AG04450 (cell line): ENCODE measurements at regions of chr1 and their contacts with region 1.

Region 1: GRCh38 chr1:41416552-41417334 is 55.5 kb downstream of the FOXO6 start:
- DNase-seq: peak; percentile 36
- H3K4me3 ChIP-seq: no peak overlapping the region
- H3K27ac ChIP-seq: no peak overlapping the region
- H3K27me3 ChIP-seq: peaks cover 21% of the 10 kb centered on the region
- CTCF ChIP-seq: peak; percentile 94

Region 2: GRCh38 chr1:41268154-41268770 is 148.5 kb before region 1 on chr1:
- CTCF ChIA-PET with region 1: interaction called, 19 read pairs
- POLR2A ChIA-PET with region 1: no interaction called
- DNase-seq: peak; percentile 46
- H3K4me3 ChIP-seq: no peak overlapping the region
- H3K27ac ChIP-seq: no peak overlapping the region
- H3K27me3 ChIP-seq: peaks cover 19% of the 10 kb centered on the region
- CTCF ChIP-seq: peak; percentile 96

Region 3: DNA sequence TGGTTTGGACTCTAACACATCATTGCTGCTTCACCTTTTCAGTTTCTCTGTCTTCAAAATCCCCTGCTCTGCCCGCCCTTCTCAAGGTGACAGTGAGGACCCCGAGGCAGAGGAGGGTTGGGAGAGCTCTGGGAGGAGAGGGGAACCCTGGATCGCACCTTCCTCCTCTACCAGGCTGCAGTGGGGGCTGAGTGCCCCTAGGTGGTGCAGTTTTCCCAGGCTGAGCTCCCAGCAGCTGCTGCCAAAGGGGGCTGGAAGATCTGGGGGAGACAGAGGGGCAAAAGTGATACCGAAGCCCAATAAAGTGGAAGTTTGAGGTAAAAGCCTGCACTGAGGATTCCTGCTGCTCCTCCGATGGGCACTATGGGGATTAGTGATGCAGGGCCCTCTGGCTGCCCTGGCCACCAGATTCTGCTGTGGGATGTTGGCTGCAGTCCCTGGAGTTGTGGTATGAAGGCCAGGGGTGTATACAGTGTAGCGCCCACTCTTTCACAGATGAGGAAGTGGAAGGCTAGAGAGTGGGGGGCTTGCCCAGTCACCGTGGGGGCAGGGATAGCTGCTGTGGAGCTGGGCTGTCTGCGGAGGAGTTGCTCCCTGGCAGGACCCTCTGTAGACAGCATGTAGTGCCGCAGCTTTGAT is 133.9 kb before region 1 on chr1:
- CTCF ChIA-PET with region 1: interaction called, 82 read pairs
- POLR2A ChIA-PET with region 1: no interaction called
- DNase-seq: no peak
- H3K4me3 ChIP-seq: no peak overlapping the region
- H3K27ac ChIP-seq: no peak overlapping the region
- H3K27me3 ChIP-seq: peaks cover 51% of the 10 kb centered on the region
- CTCF ChIP-seq: peak; percentile 94

Region 4: DNA sequence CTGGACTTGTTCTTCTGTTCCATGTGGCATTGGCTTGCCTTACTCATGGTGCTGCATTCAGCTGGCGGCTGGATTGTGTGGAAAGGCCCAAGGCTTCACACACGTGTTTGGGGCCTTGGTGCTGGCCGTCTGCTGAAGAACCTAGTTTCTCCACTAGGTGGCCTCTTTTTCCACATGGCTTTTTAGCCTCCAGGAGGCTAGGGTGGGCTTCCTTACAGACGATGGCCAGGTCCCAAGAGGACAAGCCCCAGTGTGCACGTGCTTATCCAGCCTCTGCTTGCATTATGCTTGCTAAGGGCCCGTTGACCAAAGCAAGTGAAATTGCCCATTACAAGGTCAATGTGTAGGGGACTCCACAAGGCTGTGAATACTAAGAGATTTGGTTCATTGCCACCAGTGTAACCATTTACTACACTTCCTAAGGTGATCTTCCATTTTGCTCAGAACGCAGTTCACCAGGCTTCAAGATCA is 103.0 kb before region 1 on chr1:
- CTCF ChIA-PET with region 1: interaction called, 10 read pairs
- POLR2A ChIA-PET with region 1: no interaction called
- DNase-seq: no peak
- H3K4me3 ChIP-seq: no peak overlapping the region
- H3K27ac ChIP-seq: no peak overlapping the region
- H3K27me3 ChIP-seq: peaks cover 8% of the 10 kb centered on the region
- CTCF ChIP-seq: peak; percentile 43

Region 5: GRCh38 chr1:41322835-41323627 is 93.7 kb before region 1 on chr1:
- CTCF ChIA-PET with region 1: interaction called, 17 read pairs
- POLR2A ChIA-PET with region 1: no interaction called
- DNase-seq: no peak
- H3K4me3 ChIP-seq: no peak overlapping the region
- H3K27ac ChIP-seq: no peak overlapping the region
- H3K27me3 ChIP-seq: peaks cover 14% of the 10 kb centered on the region
- CTCF ChIP-seq: peak; percentile 43

Region 6: DNA sequence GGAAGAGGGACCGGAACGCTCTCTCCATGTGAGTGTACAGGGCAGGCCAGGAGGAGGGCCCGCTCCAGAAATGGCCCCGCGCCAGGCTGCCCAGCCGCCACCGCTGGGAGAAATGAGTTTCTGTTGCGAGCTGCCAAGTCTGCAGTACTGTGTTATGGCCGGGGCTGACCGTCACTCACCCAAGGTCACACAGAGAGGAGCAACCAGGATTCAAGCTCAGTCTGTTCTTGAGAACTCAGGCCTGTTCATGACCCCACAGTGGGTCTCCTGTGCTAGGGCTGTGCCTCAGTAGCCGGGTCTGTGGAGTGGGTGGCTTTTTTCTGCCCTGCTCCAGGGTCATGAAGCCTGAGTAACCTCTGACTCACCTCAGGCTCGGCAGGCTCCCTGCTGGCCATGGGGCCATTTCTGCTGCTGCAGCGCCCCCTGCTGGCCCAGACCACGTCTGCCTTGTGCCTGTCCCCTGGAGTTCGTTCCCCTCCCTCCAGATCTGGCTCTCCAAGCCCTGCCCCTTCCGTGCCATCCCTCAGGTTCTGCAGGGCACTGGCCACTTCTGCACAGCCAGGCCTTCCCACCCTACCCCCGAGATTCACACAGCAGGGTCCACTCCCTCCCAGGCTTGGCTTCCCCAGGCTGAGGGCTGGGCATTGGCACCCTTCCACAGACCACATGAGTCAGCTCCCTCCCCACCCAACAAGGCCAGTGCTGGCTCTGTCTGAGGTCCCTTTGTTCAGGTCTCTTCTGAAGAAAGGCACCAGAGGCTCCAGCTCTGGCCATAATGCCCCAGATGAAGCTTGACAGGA is 15.9 kb after region 1 on chr1:
- CTCF ChIA-PET with region 1: interaction called, 56 read pairs
- POLR2A ChIA-PET with region 1: no interaction called
- DNase-seq: peak; percentile 34
- H3K4me3 ChIP-seq: no peak overlapping the region
- H3K27ac ChIP-seq: no peak overlapping the region
- H3K27me3 ChIP-seq: peaks cover 10% of the 10 kb centered on the region
- CTCF ChIP-seq: peak; percentile 88